ENCODE measurements at regions of chr9 and their contacts with region 1.

Region 1: DNA sequence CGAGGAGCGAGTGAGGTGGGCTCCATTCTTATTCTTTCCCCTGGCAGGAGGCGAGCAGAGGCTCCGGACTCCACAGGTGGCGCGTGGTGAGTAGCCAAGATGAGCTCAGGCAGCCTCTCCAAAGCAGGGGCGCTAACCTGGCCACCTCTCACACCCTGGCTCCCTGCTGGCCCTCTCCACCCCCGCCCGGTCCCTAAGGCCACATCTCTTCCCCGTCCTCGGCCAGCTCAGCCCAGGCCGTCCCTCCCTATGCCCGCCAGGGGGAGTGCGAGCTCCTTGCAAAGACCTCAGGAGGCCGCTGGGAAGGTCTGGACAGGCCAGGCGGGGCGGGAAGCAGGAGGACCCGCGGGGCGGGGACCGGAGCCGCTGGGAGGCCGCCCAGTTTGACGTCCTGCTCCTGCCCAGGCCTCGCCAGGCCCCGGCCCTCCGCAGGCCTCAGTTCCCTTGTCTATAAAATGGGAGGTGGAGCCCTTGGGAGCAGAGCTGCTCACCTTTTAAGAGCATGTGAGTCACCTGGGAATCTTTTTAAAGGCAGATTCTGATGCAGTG is 46.3 kb upstream of the GGTA1 start:
- DNase-seq: peak; percentile 93 to 95
- ATAC-seq: peak; percentile 95

Region 2: GRCh38 chr9:121424024-121424432 is 121.9 kb before region 1 on chr9:
- intact Hi-C with region 1: no loop called
- DNase-seq: no peak
- ATAC-seq: no peak

Region 3: DNA sequence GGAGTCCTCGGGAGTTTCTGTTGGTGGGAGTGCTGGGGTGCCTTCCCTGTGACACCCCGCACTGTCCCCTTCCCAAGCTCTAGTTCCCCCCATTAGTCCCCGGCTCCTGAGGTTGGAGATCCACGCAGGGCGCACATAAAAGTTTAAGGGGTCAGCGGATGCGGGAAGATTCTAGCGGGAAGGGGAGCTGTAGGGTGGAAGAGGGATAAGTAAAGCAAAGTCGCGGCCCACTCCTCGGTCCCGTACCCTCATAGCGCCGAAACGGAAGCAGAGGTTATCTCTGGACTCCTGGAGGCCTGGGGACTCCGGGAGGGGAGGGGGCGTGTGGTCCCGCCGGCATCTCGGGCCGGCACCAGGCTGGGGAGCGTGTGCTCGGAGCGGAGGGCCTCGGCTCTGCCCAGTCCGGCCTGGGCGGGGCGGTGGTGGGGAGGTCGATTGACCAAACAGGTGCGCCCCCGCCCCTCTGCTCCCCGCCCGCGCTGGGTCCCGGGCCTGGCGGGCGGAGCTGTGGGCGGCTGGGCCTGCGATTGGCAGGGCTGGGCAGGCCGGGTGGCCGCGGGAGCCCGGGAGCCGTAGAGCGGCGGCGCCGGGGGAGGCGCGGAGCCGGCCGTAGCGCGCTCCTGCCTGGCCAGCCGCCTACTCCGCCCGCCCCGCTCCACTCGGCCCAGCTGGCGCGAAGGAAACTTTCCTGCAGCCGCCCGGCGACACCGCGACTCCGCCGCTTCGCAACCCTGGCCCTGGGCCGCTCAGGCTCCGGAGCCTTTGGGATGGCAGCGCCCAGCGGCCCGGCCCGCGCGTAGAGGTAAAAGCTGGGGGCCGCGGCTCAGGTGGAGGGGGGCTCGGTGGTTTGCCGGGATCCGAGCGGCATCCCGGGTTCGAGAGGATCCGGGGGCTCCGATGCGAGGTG is 53.3 kb after region 1 on chr9:
- intact Hi-C with region 1: no loop called
- DNase-seq: peak; percentile 73 to 74
- ATAC-seq: peak; percentile 88

Region 4: GRCh38 chr9:121609845-121610570 is 64.1 kb after region 1 on chr9:
- intact Hi-C with region 1: loop called in 1 of 2 experiments (anchors 10 kb)
- DNase-seq: peak; percentile 24 to 43
- ATAC-seq: peak; percentile 50

Region 5: DNA sequence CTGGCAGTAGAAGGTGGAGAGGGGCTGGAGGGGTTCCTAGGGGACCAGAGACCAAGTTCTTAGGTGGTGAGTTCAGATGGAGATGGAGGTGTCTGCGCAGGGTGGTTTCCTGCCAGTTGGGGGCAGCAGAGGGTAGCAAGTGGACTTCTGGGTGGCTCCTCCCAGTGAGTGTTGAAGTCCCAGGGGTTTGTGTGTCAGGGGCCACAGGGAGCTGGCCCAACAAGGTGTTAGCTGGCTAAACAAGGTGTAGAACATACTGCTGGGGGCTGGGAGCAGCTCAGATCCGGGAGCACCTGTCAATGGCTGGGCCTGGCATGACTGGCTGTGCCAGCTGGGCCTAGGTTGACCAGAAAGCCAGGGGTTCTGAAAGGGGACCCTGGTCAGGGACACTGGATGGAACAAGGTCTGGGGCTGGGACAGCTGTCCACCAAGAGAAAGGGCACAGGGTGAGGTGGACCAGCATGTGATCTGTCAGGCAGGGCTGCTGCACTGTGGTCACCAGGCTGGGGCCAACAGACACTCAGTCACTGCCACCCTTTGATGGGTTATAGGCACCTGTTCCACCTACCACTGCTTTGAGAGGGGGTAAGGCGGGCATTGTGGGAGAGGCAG is 141.1 kb after region 1 on chr9:
- intact Hi-C with region 1: loop called in 1 of 2 experiments (anchors 10 kb)
- DNase-seq: peak; percentile 75 to 90
- ATAC-seq: peak; percentile 79

Measured in left colon (tissue), 2 donors.